Activated CD4-positive, alpha-beta T cell treated with anti-CD3 and anti-CD28 coated beads, Interleukin-2, amount 10 ng/mL, durations not matched to agents 7 days and 5 days (primary cell): ENCODE measurements at regions of chr9 and their contacts with region 1.

Region 1: DNA sequence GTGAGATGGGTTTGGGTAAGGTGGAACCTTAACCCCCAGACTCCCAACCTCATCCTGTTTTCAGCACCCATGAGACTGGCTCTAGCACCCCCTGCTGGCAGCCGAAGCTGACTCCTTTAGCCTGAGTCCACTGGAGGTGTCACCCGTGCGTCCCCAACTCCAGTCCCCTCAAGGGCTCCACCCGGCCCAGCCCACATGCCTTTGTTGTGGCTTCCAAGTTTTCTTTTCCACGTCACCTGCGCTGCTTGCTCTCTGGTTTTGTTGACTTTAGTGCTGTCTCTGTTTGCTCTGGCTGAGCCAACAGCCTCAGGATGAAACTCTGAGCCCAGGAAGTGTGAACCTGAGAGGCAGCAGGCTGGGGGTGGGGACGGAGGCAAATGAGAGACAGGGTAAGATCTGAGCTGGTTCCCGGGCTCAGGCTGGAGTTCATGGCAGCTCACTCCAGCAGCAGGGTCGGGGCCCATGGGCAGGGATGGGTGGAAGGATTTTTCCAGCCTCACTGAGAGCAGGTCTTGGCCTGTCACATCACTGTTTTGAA is 13.2 kb upstream of the AQP7 start:
- DNase-seq: peak; percentile 98
- H3K4me3 Mint-ChIP-seq: peak overlapping the region; percentile 59
- H3K27ac Mint-ChIP-seq: peak overlapping the region; percentile 99
- H3K4me1 Mint-ChIP-seq: peaks cover 61% of the 10 kb centered on the region
- H3K27me3 Mint-ChIP-seq: peaks cover 5% of the 10 kb centered on the region

Region 2: GRCh38 chr9:33311953-33312352 is 103.6 kb before region 1 on chr9:
- CTCF ChIA-PET with region 1: no interaction called
- POLR2A ChIA-PET with region 1: no interaction called
- DNase-seq: no peak
- H3K4me3 Mint-ChIP-seq: no peak overlapping the region
- H3K27ac Mint-ChIP-seq: peak overlapping the region; percentile 5
- H3K4me1 Mint-ChIP-seq: peaks cover 4% of the 10 kb centered on the region
- H3K27me3 Mint-ChIP-seq: no peaks in the 10 kb centered on the region

Region 3: DNA sequence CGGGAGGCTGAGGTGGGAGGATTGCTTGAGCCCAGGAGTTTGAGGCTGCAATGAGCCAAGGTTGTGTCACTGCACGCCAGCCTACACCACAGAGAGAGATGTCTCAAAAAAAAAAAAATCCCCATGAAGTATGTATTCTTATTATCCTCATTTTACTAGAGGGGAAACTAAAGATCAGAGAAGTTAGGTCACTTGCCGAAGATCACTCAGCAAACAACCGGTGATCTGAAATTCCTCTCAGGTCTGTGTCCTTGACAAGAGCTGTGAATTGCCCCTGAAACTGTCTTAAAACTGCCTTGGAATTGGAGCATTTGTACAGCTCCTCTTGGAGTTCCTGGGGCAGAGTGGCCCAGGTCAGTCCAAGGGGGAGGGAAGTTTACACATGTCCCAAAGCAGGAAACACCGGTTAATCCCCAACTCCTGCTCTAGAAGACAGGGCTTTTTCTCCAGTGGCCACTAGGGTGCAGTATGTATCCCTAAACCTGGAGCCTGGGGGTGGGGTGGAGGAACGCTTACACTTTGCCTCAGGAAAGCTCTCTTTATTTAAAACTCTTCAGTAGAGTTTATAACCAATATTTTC is 40.8 kb before region 1 on chr9:
- CTCF ChIA-PET with region 1: interaction called, 14 read pairs
- POLR2A ChIA-PET with region 1: no interaction called
- DNase-seq: peak; percentile 79
- H3K4me3 Mint-ChIP-seq: no peak overlapping the region
- H3K27ac Mint-ChIP-seq: no peak overlapping the region
- H3K4me1 Mint-ChIP-seq: peaks cover 13% of the 10 kb centered on the region
- H3K27me3 Mint-ChIP-seq: no peaks in the 10 kb centered on the region

Region 4: GRCh38 chr9:33404788-33405362 is 10.7 kb before region 1 on chr9:
- CTCF ChIA-PET with region 1: interaction called, 51 read pairs
- POLR2A ChIA-PET with region 1: no interaction called
- DNase-seq: no peak
- H3K4me3 Mint-ChIP-seq: no peak overlapping the region
- H3K27ac Mint-ChIP-seq: no peak overlapping the region
- H3K4me1 Mint-ChIP-seq: peaks cover 18% of the 10 kb centered on the region
- H3K27me3 Mint-ChIP-seq: peaks cover 2% of the 10 kb centered on the region

Region 5: DNA sequence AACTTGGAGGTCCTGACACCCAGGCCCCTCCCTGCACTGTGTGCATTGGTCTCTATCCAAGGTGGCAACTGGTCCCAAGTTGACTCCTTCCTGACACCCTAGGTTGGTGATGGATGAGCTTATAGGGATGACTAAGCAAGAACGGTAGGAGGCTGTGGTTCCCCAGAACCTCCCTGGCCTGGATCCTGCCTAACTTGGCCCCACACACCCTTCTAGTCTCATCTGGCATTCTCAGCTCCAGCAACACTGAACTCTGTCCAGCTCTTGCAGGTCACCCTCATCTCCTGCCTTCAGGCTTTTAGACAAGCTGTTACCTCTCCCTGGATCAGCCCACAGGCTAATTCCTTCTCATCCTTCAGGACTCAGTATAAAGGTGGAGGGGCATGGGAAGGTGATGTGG is 15.4 kb after region 1 on chr9:
- CTCF ChIA-PET with region 1: interaction called, 38 read pairs
- POLR2A ChIA-PET with region 1: no interaction called
- DNase-seq: no peak
- H3K4me3 Mint-ChIP-seq: no peak overlapping the region
- H3K27ac Mint-ChIP-seq: no peak overlapping the region
- H3K4me1 Mint-ChIP-seq: peaks cover 15% of the 10 kb centered on the region
- H3K27me3 Mint-ChIP-seq: no peaks in the 10 kb centered on the region

Region 6: GRCh38 chr9:33446946-33447798 is 31.6 kb after region 1 on chr9 and contains the start of gene AQP3:
- CTCF ChIA-PET with region 1: interaction called, 132 read pairs
- POLR2A ChIA-PET with region 1: interaction called, 9 read pairs
- DNase-seq: peak; percentile 85
- H3K4me3 Mint-ChIP-seq: peak within 1 kb of the TSS; percentile 94
- H3K27ac Mint-ChIP-seq: peak within 1 kb of the TSS; percentile 97
- H3K4me1 Mint-ChIP-seq: peaks cover 67% of the 10 kb centered on the region
- H3K27me3 Mint-ChIP-seq: no peaks in the 10 kb centered on the region
- total RNA-seq, gene AQP3: 190 to 194 TPM